Panc1 (cell line): ENCODE measurements at regions of chr1 and their contacts with region 1.

Region 1: DNA sequence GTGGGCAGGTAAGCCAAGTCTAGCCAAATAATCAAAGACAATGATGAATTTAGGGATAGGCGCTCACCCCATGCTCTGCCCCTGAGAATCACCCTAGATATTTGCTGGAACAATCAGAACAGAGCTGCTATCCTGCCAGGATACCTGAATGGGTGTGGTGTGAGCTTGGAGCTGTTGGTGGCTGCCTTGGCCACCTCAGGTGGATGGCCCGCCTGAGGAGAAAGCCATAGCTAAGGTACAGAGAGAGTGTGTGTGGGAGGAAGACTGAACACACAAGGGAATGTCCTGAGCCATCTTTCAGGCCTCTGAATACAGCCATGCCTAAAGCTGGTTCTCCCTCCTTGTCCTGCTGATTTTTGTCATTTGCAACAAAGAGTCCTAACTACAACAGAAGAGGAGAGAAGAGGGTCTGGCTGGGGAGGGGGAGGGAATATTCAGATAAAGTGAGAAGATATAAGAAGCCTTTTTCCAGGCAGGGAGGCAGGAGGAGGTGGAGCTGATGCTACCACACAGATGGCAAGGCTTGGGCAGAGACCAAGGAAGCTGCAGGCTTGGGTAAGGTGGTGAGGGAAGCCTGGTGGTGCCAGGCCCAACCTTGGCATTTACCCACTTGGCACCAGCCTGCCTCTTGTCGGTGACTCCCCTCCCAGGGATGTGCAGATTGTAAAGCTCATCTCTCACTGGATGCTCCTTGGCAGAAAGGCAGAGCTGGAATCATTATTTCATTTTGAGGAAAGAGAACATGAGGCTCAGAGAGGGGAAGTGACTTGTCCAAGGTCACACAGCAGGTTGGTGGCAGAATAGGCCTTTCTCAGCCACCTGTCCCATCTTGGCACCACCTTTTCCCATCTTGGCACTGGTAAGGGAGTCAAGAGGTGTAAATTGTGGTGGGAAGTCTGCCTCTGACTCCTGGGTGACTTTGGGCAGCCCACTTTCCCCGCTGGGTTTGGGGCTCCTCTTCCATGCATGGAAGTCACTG is 49.7 kb downstream of the NKAIN1 start:
- DNase-seq: no peak
- ATAC-seq: no peak
- H3K4me3 ChIP-seq: no peak overlapping the region
- H3K27ac ChIP-seq: no peak overlapping the region
- H3K4me1 ChIP-seq: no peaks in the 10 kb centered on the region
- H3K27me3 ChIP-seq: 0 out of 2 replicates have a peak, but pooled peaks cover 2% of the 10 kb centered on the region
- CTCF ChIP-seq: no peak

Region 2: GRCh38 chr1:30977105-30977504 is 212.9 kb before region 1 on chr1:
- CTCF ChIA-PET with region 1: no interaction called
- POLR2A ChIA-PET with region 1: no interaction called
- in situ Hi-C with region 1: no loop called
- intact Hi-C with region 1: no loop called
- DNase-seq: no peak
- ATAC-seq: peak; percentile 73
- H3K4me3 ChIP-seq: no peak overlapping the region
- H3K27ac ChIP-seq: no peak overlapping the region
- H3K4me1 ChIP-seq: peaks cover 10% of the 10 kb centered on the region
- H3K27me3 ChIP-seq: no peaks in the 10 kb centered on the region
- CTCF ChIP-seq: no peak; the same call in 1 of the 2 replicates

Region 3: GRCh38 chr1:31289021-31289420 is 99.0 kb after region 1 on chr1:
- CTCF ChIA-PET with region 1: no interaction called
- POLR2A ChIA-PET with region 1: no interaction called
- in situ Hi-C with region 1: no loop called
- intact Hi-C with region 1: no loop called
- DNase-seq: no peak
- ATAC-seq: no peak
- H3K4me3 ChIP-seq: no peak overlapping the region
- H3K27ac ChIP-seq: no peak overlapping the region
- H3K4me1 ChIP-seq: no peaks in the 10 kb centered on the region
- H3K27me3 ChIP-seq: no peaks in the 10 kb centered on the region
- CTCF ChIP-seq: no peak

Region 4: GRCh38 chr1:31335007-31335406 is 145.0 kb after region 1 on chr1:
- CTCF ChIA-PET with region 1: interaction called, 5 read pairs
- POLR2A ChIA-PET with region 1: no interaction called
- in situ Hi-C with region 1: no loop called
- intact Hi-C with region 1: loop called (anchors 2 kb)
- DNase-seq: peak; percentile 22
- ATAC-seq: peak; percentile 82; the same call in 1 of the 2 replicates
- H3K4me3 ChIP-seq: no peak overlapping the region
- H3K27ac ChIP-seq: no peak overlapping the region
- H3K4me1 ChIP-seq: no peaks in the 10 kb centered on the region
- H3K27me3 ChIP-seq: no peaks in the 10 kb centered on the region
- CTCF ChIP-seq: peak; percentile 64